T-cell (primary cell): ENCODE measurements at regions of chr12 and their contacts with region 1.

Region 1: DNA sequence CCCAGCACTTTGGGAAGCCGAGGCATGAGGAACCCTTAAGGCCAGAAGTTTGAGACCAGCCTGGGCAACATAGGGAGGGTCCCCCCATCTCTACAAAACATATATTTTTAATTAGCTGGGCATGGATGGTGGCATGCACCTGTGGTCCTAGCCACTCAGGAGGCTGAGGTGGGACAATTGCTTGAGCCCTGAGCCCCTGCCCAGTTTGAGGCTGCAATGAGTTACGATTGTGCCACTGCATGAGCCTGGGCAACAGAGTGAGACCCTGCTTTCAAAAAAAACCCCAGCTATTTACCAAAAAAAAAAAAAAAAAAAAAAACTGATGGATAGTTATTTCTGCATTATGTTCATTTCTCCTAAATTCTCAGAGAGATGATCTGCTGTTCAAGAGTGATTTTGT is 230.0 kb downstream of the SOX5 start:
- DNase-seq: no peak
- ATAC-seq: no peak
- H3K4me3 ChIP-seq: no peak overlapping the region
- H3K4me3 Mint-ChIP-seq: no peak overlapping the region
- H3K27ac ChIP-seq: no peak overlapping the region
- H3K27ac Mint-ChIP-seq: no peak overlapping the region
- H3K4me1 ChIP-seq: no peaks in the 10 kb centered on the region
- H3K4me1 Mint-ChIP-seq: no peaks in the 10 kb centered on the region
- H3K27me3 ChIP-seq: no peaks in the 10 kb centered on the region
- H3K27me3 Mint-ChIP-seq: no peaks in the 10 kb centered on the region

Region 2: DNA sequence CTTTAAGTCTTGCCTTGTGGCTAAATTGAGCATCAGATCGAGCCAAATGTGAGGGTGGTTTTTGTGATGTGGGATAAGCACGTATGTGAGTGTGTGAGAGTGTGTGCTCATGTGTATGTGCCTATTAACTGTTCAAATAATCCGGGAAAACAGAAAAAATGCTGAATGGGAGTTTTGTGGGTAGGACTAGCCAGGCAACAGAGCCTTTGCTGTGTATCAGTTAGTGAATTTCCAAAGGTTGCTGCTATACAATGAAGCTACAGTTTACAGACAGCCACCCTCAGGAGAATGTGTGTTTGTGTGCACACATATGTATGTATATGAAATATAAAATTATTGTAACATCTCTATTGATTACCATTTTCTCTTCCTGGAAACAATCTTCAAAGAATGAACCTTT is 76.0 kb after region 1 on chr12:
- CTCF ChIA-PET with region 1: no interaction called
- POLR2A ChIA-PET with region 1: interaction called in 1 of 2 experiments, 17 read pairs
- DNase-seq: no peak
- ATAC-seq: no peak
- H3K4me3 ChIP-seq: no peak overlapping the region
- H3K4me3 Mint-ChIP-seq: no peak overlapping the region
- H3K27ac ChIP-seq: no peak overlapping the region
- H3K27ac Mint-ChIP-seq: no peak overlapping the region
- H3K4me1 ChIP-seq: no peaks in the 10 kb centered on the region
- H3K4me1 Mint-ChIP-seq: no peaks in the 10 kb centered on the region
- H3K27me3 ChIP-seq: no peaks in the 10 kb centered on the region
- H3K27me3 Mint-ChIP-seq: no peaks in the 10 kb centered on the region